SK-N-SH (cell line): ENCODE measurements at regions of chr14 and their contacts with region 1.

Region 1: DNA sequence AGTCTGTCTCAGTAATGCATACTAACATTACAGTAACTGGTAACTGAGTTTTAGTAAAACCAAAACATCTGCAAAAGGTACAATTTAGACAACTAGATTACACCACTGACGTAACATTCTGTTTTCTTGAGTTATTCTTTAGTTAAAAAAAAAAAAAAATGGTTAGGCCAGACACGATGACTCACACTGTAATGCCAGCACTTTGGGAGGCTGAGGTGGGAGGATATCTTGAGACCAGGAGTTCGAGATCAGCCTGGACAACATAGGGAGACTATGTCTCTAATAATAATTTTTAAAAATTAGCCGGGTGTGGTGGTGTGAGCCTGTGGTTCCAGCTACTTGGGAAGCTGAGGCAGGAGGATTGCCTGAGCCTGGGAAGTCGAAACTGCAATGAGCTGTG is 34.1 kb downstream of the AP5M1 start:
- DNase-seq: no peak
- H3K4me3 ChIP-seq: no peak overlapping the region
- H3K27ac ChIP-seq: no peak overlapping the region
- H3K4me1 ChIP-seq: no peaks in the 10 kb centered on the region; a peak in 1 of 4 replicates
- H3K27me3 ChIP-seq: no peaks in the 10 kb centered on the region; the same call in 1 of the 2 replicates
- CTCF ChIP-seq: no peak
- EP300 ChIP-seq: no peak
- RAD21 ChIP-seq: no peak

Region 2: GRCh38 chr14:57060276-57060955 is 242.5 kb before region 1 on chr14:
- CTCF ChIA-PET with region 1: no interaction called
- POLR2A ChIA-PET with region 1: no interaction called
- DNase-seq: no peak
- H3K4me3 ChIP-seq: no peak overlapping the region
- H3K27ac ChIP-seq: no peak overlapping the region
- H3K4me1 ChIP-seq: no peaks in the 10 kb centered on the region; a peak in 1 of 4 replicates
- H3K27me3 ChIP-seq: no peaks in the 10 kb centered on the region; the same call in 1 of the 2 replicates
- CTCF ChIP-seq: no peak
- EP300 ChIP-seq: no peak
- RAD21 ChIP-seq: no peak

Region 3: DNA sequence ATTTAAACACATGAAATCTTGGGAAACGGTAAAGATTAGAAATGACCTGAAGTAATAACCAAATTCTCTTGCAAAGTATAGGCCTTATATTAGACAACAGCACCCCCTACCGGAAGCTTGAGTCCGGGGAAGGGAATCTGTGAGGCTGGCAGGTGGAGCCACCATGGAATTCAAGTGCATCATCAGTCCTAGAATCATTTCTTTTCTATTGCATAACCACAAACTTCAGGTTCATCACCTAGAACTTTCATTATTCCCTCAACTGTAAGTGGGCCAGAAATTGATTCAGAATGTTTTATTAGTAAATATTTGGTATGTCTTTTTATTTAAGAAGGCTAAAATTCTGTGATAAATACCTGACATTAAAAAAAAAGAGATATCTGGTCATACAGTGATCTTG is 14.4 kb after region 1 on chr14:
- CTCF ChIA-PET with region 1: interaction called, 10 read pairs
- POLR2A ChIA-PET with region 1: no interaction called
- DNase-seq: peak; percentile 65
- H3K4me3 ChIP-seq: no peak overlapping the region
- H3K27ac ChIP-seq: no peak overlapping the region
- H3K4me1 ChIP-seq: no peaks in the 10 kb centered on the region
- H3K27me3 ChIP-seq: peaks cover 23% of the 10 kb centered on the region; the same call in 1 of the 2 replicates
- CTCF ChIP-seq: peak; percentile 91
- EP300 ChIP-seq: no peak
- RAD21 ChIP-seq: peak; percentile 88